Aorta (tissue), 5 donors: ENCODE measurements at regions of chr15 and their contacts with region 1.

Region 1: GRCh38 chr15:62469874-62470688 is 305.0 kb upstream of the C2CD4B start:
- DNase-seq: peak; percentile 83 to 84
- ATAC-seq: peak; percentile 80
- H3K4me3 ChIP-seq: no peak overlapping the region
- H3K27ac ChIP-seq: peak overlapping the region; percentile 58 to 100
- H3K4me1 ChIP-seq: peaks cover 11 to 25% of the 10 kb centered on the region in 2 donors
- H3K27me3 ChIP-seq: no peaks in the 10 kb centered on the region

Region 2: GRCh38 chr15:62403164-62403809 is 66.8 kb before region 1 on chr15:
- intact Hi-C with region 1: loop called in 1 of 2 experiments (anchors 5 kb)
- DNase-seq: no peak
- ATAC-seq: no peak
- H3K4me3 ChIP-seq: no peak overlapping the region
- H3K27ac ChIP-seq: peak overlapping the region in 1 of 2 donors; percentile 37
- H3K4me1 ChIP-seq: peaks cover 0 to 5% of the 10 kb centered on the region in 2 donors
- H3K27me3 ChIP-seq: no peaks in the 10 kb centered on the region

Region 3: DNA sequence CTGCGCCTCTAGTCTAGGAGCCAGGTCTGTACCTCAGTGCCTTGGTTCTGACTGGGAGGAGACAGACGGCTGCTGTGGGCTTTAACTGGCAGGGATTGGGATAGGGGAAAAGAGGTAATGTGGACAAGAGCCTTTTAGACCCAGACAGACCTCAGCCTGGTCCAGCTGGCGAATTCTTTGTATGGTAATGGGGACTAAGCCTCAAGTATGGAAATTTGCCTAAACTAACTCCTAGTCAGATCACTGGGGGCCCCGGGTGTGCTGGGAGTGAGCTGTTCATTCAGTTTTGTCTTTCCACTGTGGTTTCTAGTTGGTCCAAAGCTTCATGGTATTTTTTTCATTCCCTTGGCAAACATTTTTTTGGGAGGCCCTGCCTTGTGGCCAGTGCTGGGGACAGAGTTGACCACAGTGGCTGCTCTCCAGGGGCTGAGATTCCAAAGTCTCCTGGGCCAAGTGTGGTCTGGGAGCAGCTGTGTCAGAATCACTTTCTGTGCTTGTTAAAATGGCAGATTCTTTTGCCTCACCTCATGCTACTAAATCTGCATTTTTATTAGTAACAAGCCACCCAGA is 43.6 kb before region 1 on chr15:
- intact Hi-C with region 1: no loop called
- DNase-seq: peak in 1 of 2 donors; percentile 65
- ATAC-seq: peak; percentile 61
- H3K4me3 ChIP-seq: no peak overlapping the region
- H3K27ac ChIP-seq: peak overlapping the region; percentile 33 to 70
- H3K4me1 ChIP-seq: peaks cover 4 to 11% of the 10 kb centered on the region in 2 donors
- H3K27me3 ChIP-seq: no peaks in the 10 kb centered on the region

Region 4: GRCh38 chr15:62495670-62496614 is 25.9 kb after region 1 on chr15:
- intact Hi-C with region 1: loop called in 1 of 2 experiments (anchors 2 kb)
- DNase-seq: peak in 1 of 2 donors; percentile 74
- ATAC-seq: peak; percentile 88
- H3K4me3 ChIP-seq: no peak overlapping the region
- H3K27ac ChIP-seq: peak overlapping the region in 1 of 2 donors; percentile 80
- H3K4me1 ChIP-seq: peaks cover 3 to 4% of the 10 kb centered on the region in 2 donors
- H3K27me3 ChIP-seq: no peaks in the 10 kb centered on the region

Region 5: GRCh38 chr15:62544446-62544845 is 74.4 kb after region 1 on chr15:
- intact Hi-C with region 1: loop called in 1 of 2 experiments (anchors 5 kb)
- DNase-seq: no peak
- ATAC-seq: no peak
- H3K4me3 ChIP-seq: no peak overlapping the region
- H3K27ac ChIP-seq: peak overlapping the region in 1 of 2 donors; percentile 69
- H3K4me1 ChIP-seq: peaks cover 8 to 25% of the 10 kb centered on the region in 2 donors
- H3K27me3 ChIP-seq: no peaks in the 10 kb centered on the region